ENCODE measurements at regions of chr3 and their contacts with region 1.

Region 1: DNA sequence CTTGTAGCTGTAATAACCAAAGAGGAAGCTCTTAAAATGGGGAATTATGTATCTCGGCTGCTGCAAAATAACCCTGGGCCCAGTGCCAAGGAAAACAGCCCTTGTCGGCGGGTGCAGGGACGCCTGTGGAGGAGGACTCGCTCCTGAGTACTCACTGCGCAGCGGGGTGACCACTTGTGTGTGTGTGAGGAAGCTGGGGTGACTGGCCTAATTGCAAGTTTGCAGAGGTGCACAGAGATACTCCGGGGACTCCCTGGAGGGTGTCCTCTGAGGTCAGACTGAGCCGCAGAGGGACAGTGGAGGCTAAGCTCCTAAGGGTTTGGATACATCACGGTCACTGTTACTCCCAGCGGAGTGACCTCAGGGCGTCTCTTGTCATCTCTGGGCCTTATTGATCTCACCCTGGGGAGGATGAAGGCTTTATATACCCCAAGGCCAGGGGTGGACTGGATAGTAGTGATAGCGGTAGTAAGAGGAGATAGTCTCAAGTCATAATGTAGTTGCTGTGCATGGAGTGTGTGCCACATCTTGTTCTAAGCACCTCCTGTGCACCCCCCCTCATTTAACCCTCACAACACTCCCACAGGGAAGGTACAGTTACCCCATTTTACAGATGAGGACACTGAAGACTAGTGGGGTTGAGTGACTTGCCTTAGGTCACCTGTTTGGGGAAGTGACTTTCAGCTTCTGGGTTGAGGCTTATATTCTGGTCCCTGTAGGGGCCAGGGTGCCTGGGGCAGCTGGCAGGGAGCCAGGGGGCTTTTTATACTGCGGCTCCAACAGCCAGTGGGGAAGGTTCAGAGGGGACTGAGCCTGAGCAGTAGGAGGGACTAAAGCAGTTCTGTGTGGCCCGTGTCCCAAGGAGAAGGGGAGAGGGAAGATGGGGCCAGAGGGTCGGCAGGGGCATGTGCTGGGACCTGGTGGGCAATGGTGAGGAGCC is 37.4 kb downstream of the SLC6A6 start:
- DNase-seq: peak; percentile 84 to 89 (median 88)
- ATAC-seq: peak; percentile 25 to 45 (median 42)
- H3K4me3 ChIP-seq: peak overlapping the region in 1 of 12 donors; percentile 9
- H3K27ac ChIP-seq: peak overlapping the region in 6 of 12 donors; percentile 6 to 80 (median 38)
- H3K4me1 ChIP-seq: peaks cover 3 to 78% (median 60%) of the 10 kb centered on the region in 12 donors
- H3K27me3 ChIP-seq: peaks cover 0 to 10% (median 0%) of the 10 kb centered on the region in 9 donors
- CTCF ChIP-seq: no peak
- POLR2A ChIP-seq: no peak

Region 2: GRCh38 chr3:14467814-14468620 is 28.2 kb after region 1 on chr3:
- intact Hi-C with region 1: no loop called
- DNase-seq: peak in 1 of 5 donors; percentile 30
- ATAC-seq: peak in 2 of 4 donors; percentile 48 to 53
- H3K4me3 ChIP-seq: no peak overlapping the region
- H3K27ac ChIP-seq: no peak overlapping the region
- H3K4me1 ChIP-seq: peaks cover 0 to 25% (median 0%) of the 10 kb centered on the region in 12 donors
- H3K27me3 ChIP-seq: peaks cover 0 to 5% (median 0%) of the 10 kb centered on the region in 9 donors
- CTCF ChIP-seq: peak; percentile 77 to 94 (median 89)
- POLR2A ChIP-seq: no peak

Region 3: GRCh38 chr3:14482271-14482721 is 42.4 kb after region 1 on chr3:
- intact Hi-C with region 1: loop called in 1 of 10 experiments (anchors 2 kb)
- DNase-seq: peak in 4 of 5 donors; percentile 42 to 71 (median 56)
- ATAC-seq: peak in 3 of 4 donors; percentile 35 to 70 (median 40)
- H3K4me3 ChIP-seq: no peak overlapping the region
- H3K27ac ChIP-seq: peak overlapping the region in 5 of 12 donors; percentile 10 to 66 (median 49)
- H3K4me1 ChIP-seq: peaks cover 0 to 43% (median 26%) of the 10 kb centered on the region in 12 donors
- H3K27me3 ChIP-seq: no peaks in the 10 kb centered on the region
- CTCF ChIP-seq: peak in 2 of 12 donors; percentile 15 to 26
- POLR2A ChIP-seq: no peak

Region 4: DNA sequence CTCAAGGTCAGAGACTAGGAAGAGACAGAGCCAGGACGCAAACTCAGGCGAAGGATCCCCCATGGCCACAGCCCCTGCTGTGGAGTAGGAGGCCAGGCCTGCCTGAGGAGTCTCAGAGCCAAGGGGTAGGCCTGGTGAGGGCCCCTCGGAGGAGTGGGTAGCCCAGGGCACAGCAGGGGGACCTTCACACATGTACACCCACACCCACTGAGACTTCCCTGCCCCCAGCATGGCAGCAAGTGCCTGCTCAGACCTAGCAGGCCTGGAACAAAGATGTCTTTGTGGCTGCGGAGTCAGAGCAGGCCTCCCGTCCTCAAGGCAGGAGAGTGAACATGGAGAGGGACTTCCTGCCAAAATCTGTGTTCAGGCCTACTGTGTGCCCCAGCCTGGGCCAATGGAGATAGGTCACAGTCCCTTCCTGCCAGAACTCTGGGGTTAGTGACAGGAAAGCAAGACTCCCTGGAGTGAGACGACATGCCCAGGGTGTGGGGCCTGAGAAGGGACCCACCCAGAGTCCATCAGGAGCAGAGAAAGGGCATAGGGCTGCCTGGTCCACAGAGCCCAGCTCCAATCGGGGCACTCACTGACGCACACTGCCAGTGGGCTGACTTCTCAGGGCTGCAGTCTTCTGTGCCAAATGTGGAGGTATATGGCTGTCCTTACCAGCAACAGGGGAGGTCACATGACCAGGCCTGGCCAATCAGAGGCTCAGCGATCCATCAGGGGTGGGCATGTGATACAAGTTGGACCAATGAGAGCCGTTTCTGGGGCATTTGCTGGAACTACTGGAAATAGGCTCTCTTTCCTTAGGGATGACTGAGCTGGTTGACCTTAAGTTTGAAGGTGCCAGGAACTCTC is 98.0 kb after region 1 on chr3:
- intact Hi-C with region 1: no loop called
- DNase-seq: peak in 4 of 5 donors; percentile 54 to 77 (median 66)
- ATAC-seq: peak in 3 of 4 donors; percentile 47 to 53 (median 49)
- H3K4me3 ChIP-seq: peak overlapping the region in 2 of 12 donors; percentile 11 to 21
- H3K27ac ChIP-seq: peak overlapping the region in 11 of 12 donors; percentile 49 to 95 (median 88)
- H3K4me1 ChIP-seq: peaks cover 0 to 78% (median 54%) of the 10 kb centered on the region in 12 donors
- H3K27me3 ChIP-seq: peaks cover 0 to 3% (median 0%) of the 10 kb centered on the region in 9 donors
- CTCF ChIP-seq: no peak
- POLR2A ChIP-seq: no peak

Measured in heart left ventricle (tissue), 16 donors.